Heart left ventricle (tissue), 16 donors: ENCODE measurements at regions of chr9 and their contacts with region 1.

Region 1: DNA sequence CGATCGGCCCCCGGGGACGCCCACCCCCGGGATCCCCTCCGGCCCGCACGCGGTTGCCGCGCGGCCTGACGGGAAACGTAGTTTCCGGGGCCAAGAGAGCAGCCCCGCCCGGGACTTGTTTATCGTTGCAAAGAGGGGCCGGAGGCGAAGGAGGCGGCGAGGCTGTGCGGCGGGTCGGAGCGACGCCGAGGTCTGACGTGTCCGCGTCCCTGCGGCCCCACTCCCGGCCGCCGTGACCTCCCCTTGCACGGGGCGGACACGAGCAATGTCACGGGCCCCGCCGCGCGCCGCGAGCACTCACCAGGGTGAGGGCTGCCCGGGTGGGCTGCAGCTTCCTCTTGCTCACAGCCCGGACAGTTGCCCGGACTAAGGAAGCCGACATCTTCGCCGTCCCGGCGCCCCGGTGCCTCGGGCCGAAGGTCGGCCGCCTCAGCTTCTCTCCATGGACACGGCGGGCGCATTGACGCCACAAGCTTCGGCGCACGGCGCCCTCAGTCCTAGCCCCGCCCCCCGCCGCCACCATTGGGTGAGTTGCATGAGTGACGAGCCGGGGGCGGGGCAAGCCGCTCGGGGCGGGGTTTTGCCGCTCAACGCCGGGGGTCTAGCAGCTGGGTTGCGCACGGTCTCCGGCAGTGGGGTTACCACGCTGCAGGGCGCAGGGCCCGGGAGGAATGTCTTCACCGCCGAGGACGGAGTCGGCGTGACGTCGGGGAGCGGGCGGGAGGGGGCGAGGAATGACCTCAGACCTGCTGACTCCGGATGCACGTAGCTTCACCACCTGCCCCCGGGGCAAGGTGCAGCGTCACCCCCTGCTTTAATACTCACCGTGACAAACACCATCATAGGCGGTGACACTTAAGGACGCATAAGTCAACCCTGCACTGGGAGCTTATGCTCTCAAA is at the start of gene ISCA1:
- DNase-seq: peak; percentile 97 to 99 (median 98)
- ATAC-seq: peak; percentile 94 to 97 (median 97)
- H3K4me3 ChIP-seq: peak within 1 kb of the TSS; percentile 57 to 98 (median 88)
- H3K27ac ChIP-seq: peak within 1 kb of the TSS; percentile 91 to 99 (median 97)
- H3K4me1 ChIP-seq: peaks cover 0 to 44% (median 34%) of the 10 kb centered on the region in 12 donors
- H3K27me3 ChIP-seq: no peaks in the 10 kb centered on the region
- CTCF ChIP-seq: no peak
- POLR2A ChIP-seq: peak; percentile 64 to 95
- total RNA-seq, gene ISCA1: 47.1 to 104 (median 72.6) TPM

Region 2: GRCh38 chr9:85940832-85941621 is 341.3 kb before region 1 on chr9 and contains the start of gene NAA35:
- intact Hi-C with region 1: loop called in 1 of 10 experiments (anchors 10 kb)
- DNase-seq: peak; percentile 98 to 99 (median 98)
- ATAC-seq: peak; percentile 97 to 99 (median 98)
- H3K4me3 ChIP-seq: peak within 1 kb of the TSS; percentile 72 to 100 (median 95)
- H3K27ac ChIP-seq: peak within 1 kb of the TSS; percentile 83 to 99 (median 96)
- H3K4me1 ChIP-seq: peaks cover 4 to 39% (median 26%) of the 10 kb centered on the region in 12 donors
- H3K27me3 ChIP-seq: no peaks in the 10 kb centered on the region
- CTCF ChIP-seq: no peak
- POLR2A ChIP-seq: peak in 1 of 2 donors; percentile 40
- total RNA-seq, gene NAA35: 13.1 to 21.8 (median 16.5) TPM

Region 3: GRCh38 chr9:86230858-86231257 is 51.5 kb before region 1 on chr9:
- intact Hi-C with region 1: no loop called
- DNase-seq: no peak
- ATAC-seq: no peak
- H3K4me3 ChIP-seq: no peak overlapping the region
- H3K27ac ChIP-seq: no peak overlapping the region
- H3K4me1 ChIP-seq: no peaks in the 10 kb centered on the region
- H3K27me3 ChIP-seq: no peaks in the 10 kb centered on the region
- CTCF ChIP-seq: no peak
- POLR2A ChIP-seq: no peak

Region 4: DNA sequence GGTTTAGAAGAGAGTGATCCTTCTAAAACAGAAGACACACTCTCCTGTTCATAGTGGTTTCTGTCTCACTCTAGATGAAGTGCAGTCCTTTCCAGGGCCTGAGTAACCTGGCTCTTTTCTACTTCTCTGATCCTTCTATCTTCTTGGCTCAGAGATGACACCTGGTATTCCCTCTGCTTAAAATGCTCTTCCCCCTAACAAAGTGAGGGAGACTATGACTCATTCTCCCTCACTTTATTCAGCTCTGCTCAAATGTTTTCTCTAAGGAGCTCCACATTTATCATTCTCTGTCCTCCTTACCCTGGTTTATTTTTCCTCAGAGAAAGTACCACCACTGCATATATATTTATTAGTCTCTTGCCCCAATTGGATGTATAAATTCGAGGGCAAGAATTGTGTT is 47.3 kb after region 1 on chr9:
- intact Hi-C with region 1: no loop called
- DNase-seq: no peak
- ATAC-seq: no peak
- H3K4me3 ChIP-seq: no peak overlapping the region
- H3K27ac ChIP-seq: no peak overlapping the region
- H3K4me1 ChIP-seq: no peaks in the 10 kb centered on the region
- H3K27me3 ChIP-seq: no peaks in the 10 kb centered on the region
- CTCF ChIP-seq: no peak
- POLR2A ChIP-seq: no peak

Region 5: GRCh38 chr9:86354011-86354817 is 71.9 kb after region 1 on chr9 and contains the start of gene TUT7:
- intact Hi-C with region 1: loop called in 1 of 10 experiments (anchors 5 kb)
- DNase-seq: peak; percentile 96 to 98 (median 97)
- ATAC-seq: peak; percentile 98
- H3K4me3 ChIP-seq: peak within 1 kb of the TSS; percentile 55 to 99 (median 84)
- H3K27ac ChIP-seq: peak within 1 kb of the TSS; percentile 84 to 99 (median 94)
- H3K4me1 ChIP-seq: peaks cover 4 to 62% (median 45%) of the 10 kb centered on the region in 12 donors
- H3K27me3 ChIP-seq: no peaks in the 10 kb centered on the region
- CTCF ChIP-seq: no peak
- POLR2A ChIP-seq: peak in 1 of 2 donors; percentile 86
- total RNA-seq, gene TUT7: 9.7 to 31.0 (median 16.5) TPM